ENCODE measurements at regions of chr16 and their contacts with region 1.

Region 1: DNA sequence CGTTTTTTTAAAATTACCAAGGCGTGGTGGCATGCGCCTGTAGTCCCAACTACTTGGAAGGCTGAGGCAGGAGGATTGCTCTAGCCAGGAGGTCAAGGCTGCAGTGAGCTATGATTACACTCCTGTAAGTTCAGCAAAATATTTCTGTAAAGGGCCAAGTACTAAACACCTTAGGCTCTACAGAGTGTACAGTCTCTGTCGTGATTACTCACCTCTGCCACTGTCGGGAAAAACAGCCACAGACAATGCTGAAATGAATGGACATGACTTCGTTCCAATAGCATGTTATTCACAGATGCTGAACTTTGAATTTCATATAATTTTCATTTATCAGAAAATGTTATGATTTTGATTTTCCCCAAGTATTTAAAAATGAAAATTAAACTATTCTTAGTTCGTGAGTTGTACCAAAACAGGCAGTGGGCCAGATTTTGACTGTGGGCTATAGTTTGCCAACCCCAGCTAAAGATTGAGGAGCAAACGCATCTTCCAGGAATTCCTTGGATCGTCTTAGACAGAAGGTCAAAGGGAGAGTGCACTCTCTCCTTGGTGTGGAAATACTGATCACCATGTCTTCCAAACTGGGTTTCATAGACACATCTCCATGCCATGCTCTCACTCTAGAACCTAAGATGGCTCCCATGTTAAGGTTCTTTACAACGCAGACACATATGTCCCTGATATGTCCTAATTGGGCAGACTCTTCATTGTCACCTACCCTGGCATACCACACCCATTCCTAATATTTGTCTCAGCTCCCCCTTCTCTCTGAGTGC is 89.5 kb downstream of the MARF1 start:
- DNase-seq: peak; percentile 28
- ATAC-seq: no peak
- H3K4me3 ChIP-seq: no peak overlapping the region
- H3K27ac ChIP-seq: no peak overlapping the region
- H3K4me1 ChIP-seq: no peaks in the 10 kb centered on the region
- H3K27me3 ChIP-seq: no peaks in the 10 kb centered on the region
- CTCF ChIP-seq: no peak
- POLR2A ChIP-seq: no peak
- RAD21 ChIP-seq: no peak

Region 2: DNA sequence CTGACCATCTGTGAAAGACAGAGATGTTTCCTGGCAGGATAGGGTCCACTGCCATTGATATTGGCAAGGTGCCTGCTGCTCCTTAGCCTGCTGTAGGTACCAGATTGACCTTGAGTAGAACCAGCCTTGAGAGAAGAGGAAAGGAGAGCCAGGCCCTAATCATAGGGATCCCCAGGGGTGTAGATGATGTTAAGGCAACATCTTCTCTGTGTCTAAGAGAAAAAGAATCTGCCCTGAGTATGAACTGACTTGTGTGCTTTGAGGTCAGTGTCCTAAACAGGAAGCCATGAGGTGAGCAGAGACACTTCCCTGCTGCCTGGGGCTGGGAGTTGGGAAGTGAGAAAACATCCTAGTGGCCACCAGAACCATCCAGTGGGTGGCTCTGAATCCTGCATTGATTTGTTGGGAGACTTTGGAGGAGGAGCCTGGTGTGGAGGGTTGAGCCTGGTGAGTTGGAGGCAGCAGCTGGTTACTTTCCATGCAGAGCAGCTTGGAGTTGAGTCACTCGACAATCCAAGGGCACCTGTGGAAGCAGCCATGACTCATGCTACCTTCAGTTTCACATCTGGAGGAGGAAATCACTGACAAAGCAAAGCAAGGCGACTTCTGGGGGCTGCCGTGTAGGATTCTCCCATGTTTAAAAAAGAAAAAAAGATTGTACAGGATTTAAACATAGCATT is 71.3 kb before region 1 on chr16:
- CTCF ChIA-PET with region 1: no interaction called
- POLR2A ChIA-PET with region 1: no interaction called
- dilution Hi-C with region 1: no loop called
- in situ Hi-C with region 1: no loop called
- intact Hi-C with region 1: loop called (anchors 5 kb)
- DNase-seq: peak; percentile 99
- ATAC-seq: peak; percentile 98
- H3K4me3 ChIP-seq: no peak overlapping the region
- H3K27ac ChIP-seq: peak overlapping the region; percentile 59
- H3K4me1 ChIP-seq: peaks cover 6% of the 10 kb centered on the region
- H3K27me3 ChIP-seq: no peaks in the 10 kb centered on the region
- CTCF ChIP-seq: peak; percentile 37
- POLR2A ChIP-seq: no peak
- RAD21 ChIP-seq: peak; percentile 39

Region 3: GRCh38 chr16:15493466-15494150 is 59.9 kb before region 1 on chr16:
- CTCF ChIA-PET with region 1: no interaction called
- POLR2A ChIA-PET with region 1: no interaction called
- dilution Hi-C with region 1: no loop called
- in situ Hi-C with region 1: no loop called
- intact Hi-C with region 1: no loop called
- DNase-seq: peak; percentile 52
- ATAC-seq: no peak
- H3K4me3 ChIP-seq: no peak overlapping the region
- H3K27ac ChIP-seq: no peak overlapping the region
- H3K4me1 ChIP-seq: peaks cover 16% of the 10 kb centered on the region
- H3K27me3 ChIP-seq: no peaks in the 10 kb centered on the region
- CTCF ChIP-seq: no peak
- POLR2A ChIP-seq: no peak
- RAD21 ChIP-seq: no peak

Region 4: DNA sequence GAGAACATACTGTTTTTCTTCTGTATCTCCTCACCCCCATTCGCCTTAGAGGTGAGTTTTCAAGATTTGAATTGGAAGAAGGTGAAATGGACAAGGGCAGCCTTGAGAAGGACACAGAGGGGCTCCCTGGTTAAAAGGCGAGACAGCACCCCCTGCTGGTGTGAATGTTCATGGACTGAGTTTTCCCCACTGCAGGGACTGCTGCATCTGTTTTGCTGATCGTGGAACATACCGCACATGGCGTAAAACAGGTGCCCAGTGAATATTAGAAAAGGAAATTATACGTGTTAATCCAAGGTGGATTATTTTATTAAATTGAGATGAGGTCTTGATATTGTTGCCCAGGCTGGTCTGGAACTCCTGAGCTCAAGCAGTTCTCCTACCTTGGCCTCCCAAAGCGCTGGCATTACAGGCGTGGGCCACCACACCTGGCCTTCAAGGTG is 151.1 kb after region 1 on chr16:
- CTCF ChIA-PET with region 1: no interaction called
- POLR2A ChIA-PET with region 1: no interaction called
- dilution Hi-C with region 1: no loop called
- in situ Hi-C with region 1: no loop called
- intact Hi-C with region 1: loop called (anchors 5 kb)
- DNase-seq: peak; percentile 69
- ATAC-seq: peak; percentile 73
- H3K4me3 ChIP-seq: no peak overlapping the region
- H3K27ac ChIP-seq: no peak overlapping the region
- H3K4me1 ChIP-seq: peaks cover 8% of the 10 kb centered on the region
- H3K27me3 ChIP-seq: no peaks in the 10 kb centered on the region
- CTCF ChIP-seq: peak; percentile 78
- POLR2A ChIP-seq: no peak
- RAD21 ChIP-seq: peak; percentile 81